Ascending aorta (tissue), 2 donors: ENCODE measurements at regions of chr4 and their contacts with region 1.

Region 1: DNA sequence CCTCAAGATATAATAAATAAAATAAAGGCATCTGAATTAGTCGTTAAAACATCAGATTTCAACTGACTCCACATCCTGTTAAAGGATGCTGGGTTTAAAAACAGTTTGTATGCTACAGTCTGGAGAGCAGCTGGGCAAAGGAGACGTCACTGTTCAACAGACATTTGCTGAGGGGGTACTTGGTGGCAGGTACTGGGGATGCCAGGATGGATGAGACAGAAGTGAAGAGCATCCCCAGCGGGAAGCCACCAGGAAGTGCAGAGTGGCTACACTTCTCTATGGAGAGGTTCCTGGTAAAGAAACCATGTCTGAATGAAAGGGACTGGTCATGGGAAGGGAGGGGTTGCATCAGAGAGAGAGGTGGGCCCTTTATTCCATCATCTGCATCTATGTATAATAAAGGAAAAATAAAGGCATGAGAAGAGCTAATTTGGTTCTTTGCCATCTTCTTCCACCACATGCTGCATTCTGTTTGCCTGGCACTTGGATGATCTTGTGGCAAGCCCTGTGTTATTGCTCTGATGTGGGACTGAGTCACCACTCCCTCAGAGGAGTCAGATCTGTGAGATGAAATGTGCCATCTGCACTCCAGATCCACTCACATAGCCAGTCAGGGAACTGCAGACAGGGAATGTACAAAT is 145.0 kb downstream of the SOWAHB start:
- DNase-seq: peak in 1 of 2 donors; percentile 85
- H3K4me3 ChIP-seq: peak overlapping the region in 1 of 2 donors; percentile 39
- H3K27ac ChIP-seq: peak overlapping the region; percentile 76 to 79
- H3K4me1 ChIP-seq: peaks cover 13 to 40% of the 10 kb centered on the region in 2 donors
- H3K27me3 ChIP-seq: no peaks in the 10 kb centered on the region
- CTCF ChIP-seq: no peak

Region 2: DNA sequence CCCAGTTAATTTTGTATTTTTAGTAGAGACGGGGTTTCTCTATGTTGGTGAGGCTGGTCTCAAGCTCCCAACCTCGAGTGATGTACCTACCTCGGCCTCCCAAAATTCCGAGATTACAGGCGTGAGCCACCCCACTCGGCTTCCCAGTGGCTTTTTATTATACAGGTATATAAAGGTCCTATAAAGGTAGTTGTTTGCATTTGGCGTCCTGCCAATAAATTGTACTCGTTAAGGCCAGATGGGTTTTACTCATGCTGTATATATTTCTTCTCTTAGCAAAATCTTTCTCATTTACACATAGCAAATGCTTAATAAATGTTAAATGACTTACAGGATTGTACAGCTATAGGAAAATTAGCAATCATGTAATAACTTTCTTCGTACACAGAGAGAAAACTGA is 311.1 kb before region 1 on chr4:
- intact Hi-C with region 1: no loop called
- DNase-seq: no peak
- H3K4me3 ChIP-seq: no peak overlapping the region
- H3K27ac ChIP-seq: no peak overlapping the region
- H3K4me1 ChIP-seq: no peaks in the 10 kb centered on the region
- H3K27me3 ChIP-seq: no peaks in the 10 kb centered on the region
- CTCF ChIP-seq: no peak

Region 3: GRCh38 chr4:76606645-76607265 is 146.2 kb before region 1 on chr4:
- intact Hi-C with region 1: no loop called
- DNase-seq: no peak
- H3K4me3 ChIP-seq: no peak overlapping the region
- H3K27ac ChIP-seq: peak overlapping the region; percentile 73 to 75
- H3K4me1 ChIP-seq: peaks cover 19 to 57% of the 10 kb centered on the region in 2 donors
- H3K27me3 ChIP-seq: no peaks in the 10 kb centered on the region
- CTCF ChIP-seq: no peak

Region 4: DNA sequence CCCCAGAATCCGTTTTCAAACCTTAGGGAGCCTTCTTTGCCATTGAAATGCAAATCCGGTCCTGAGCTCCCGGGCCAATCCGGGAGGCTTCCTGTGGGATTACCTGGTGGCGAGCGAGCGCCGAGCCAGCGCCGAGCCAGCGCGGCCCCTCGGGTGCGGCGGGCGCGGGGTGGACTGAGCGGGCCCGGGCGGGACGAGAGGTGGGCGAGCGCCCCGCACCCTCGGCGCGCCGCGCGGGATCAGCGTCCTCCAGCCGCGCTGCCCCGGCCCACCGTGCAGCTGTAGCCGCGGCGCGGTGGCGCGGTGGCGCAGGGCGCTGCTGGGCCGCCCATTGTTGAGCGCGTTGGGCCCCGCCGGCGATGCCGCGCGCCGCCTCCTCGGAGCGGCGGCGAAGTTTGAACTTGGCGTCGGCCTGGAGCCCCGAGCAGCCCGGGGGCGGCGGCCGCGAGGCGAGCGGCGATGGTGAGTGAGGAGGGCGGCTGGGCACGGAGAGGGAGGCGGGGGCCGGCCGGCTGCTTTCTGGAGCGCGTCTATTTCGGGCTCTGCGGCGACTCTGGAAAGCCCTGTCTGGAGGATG is 63.7 kb before region 1 on chr4:
- intact Hi-C with region 1: loop called (anchors 5 kb)
- DNase-seq: peak in 1 of 2 donors; percentile 71
- H3K4me3 ChIP-seq: peak overlapping the region; percentile 64 to 97
- H3K27ac ChIP-seq: peak overlapping the region; percentile 89 to 98
- H3K4me1 ChIP-seq: peaks cover 0 to 28% of the 10 kb centered on the region in 2 donors
- H3K27me3 ChIP-seq: no peaks in the 10 kb centered on the region
- CTCF ChIP-seq: peak in 1 of 3 experiments; percentile 19

Region 5: DNA sequence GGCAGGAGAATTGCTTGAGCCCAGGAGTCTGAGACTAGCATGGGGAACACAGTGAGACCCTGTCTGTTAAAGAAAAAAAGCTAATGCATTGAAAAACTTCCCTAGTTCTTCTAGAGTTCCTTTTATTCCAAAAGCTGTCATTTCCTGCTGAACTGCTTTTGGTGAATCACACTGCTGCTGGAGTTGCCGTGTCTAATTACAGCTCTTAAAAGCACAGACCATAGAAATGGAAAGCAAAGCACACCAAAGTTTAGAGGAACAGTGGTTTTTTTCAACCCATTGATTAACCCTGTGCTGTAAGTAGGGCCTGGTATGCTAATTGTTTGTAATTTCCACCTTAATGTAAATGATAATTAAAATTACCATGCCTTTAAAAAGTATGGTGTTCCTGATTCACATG is 248.9 kb after region 1 on chr4:
- intact Hi-C with region 1: no loop called
- DNase-seq: no peak
- H3K4me3 ChIP-seq: no peak overlapping the region
- H3K27ac ChIP-seq: peak overlapping the region; percentile 39 to 58
- H3K4me1 ChIP-seq: peaks cover 9 to 25% of the 10 kb centered on the region in 2 donors
- H3K27me3 ChIP-seq: no peaks in the 10 kb centered on the region
- CTCF ChIP-seq: no peak